Heart right ventricle (tissue), 16 donors: ENCODE measurements at regions of chr9 and their contacts with region 1.

Region 1: GRCh38 chr9:70403618-70404025 is 10.8 kb downstream of the KLF9 start:
- DNase-seq: no peak
- ATAC-seq: peak in 3 of 8 donors; percentile 7 to 22 (median 21)
- H3K4me3 ChIP-seq: no peak overlapping the region
- H3K27ac ChIP-seq: peak overlapping the region in 8 of 10 donors; percentile 38 to 87 (median 64)
- H3K4me1 ChIP-seq: peaks cover 56 to 100% (median 100%) of the 10 kb centered on the region in 9 donors
- H3K27me3 ChIP-seq: no peaks in the 10 kb centered on the region
- CTCF ChIP-seq: no peak

Region 2: GRCh38 chr9:70362952-70363351 is 40.7 kb before region 1 on chr9:
- intact Hi-C with region 1: loop called in 1 of 10 experiments (anchors 5 kb)
- DNase-seq: no peak
- ATAC-seq: peak in 1 of 8 donors; percentile 25
- H3K4me3 ChIP-seq: no peak overlapping the region
- H3K27ac ChIP-seq: no peak overlapping the region
- H3K4me1 ChIP-seq: no peaks in the 10 kb centered on the region
- H3K27me3 ChIP-seq: no peaks in the 10 kb centered on the region
- CTCF ChIP-seq: no peak

Region 3: GRCh38 chr9:70382709-70383605 is 20.7 kb before region 1 on chr9:
- intact Hi-C with region 1: no loop called
- DNase-seq: no peak
- ATAC-seq: peak in 4 of 8 donors; percentile 16 to 41 (median 20)
- H3K4me3 ChIP-seq: no peak overlapping the region
- H3K27ac ChIP-seq: peak overlapping the region in 1 of 10 donors; percentile 3
- H3K4me1 ChIP-seq: peaks cover 3 to 65% (median 33%) of the 10 kb centered on the region in 9 donors
- H3K27me3 ChIP-seq: no peaks in the 10 kb centered on the region
- CTCF ChIP-seq: no peak